ENCODE measurements at regions of chr7 and their contacts with region 1.

Region 1: GRCh38 chr7:155565596-155565995 is 19.2 kb upstream of the CNPY1 start:
- DNase-seq: no peak
- H3K4me3 ChIP-seq: no peak overlapping the region
- H3K4me3 Mint-ChIP-seq: no peak overlapping the region
- H3K27ac Mint-ChIP-seq: no peak overlapping the region
- H3K4me1 ChIP-seq: 0 out of 2 replicates have a peak, but pooled peaks cover 2% of the 10 kb centered on the region
- H3K4me1 Mint-ChIP-seq: no peaks in the 10 kb centered on the region
- H3K27me3 ChIP-seq: no peaks in the 10 kb centered on the region
- H3K27me3 Mint-ChIP-seq: no peaks in the 10 kb centered on the region
- CTCF ChIP-seq: no peak

Region 2: GRCh38 chr7:155497149-155497901 is 68.3 kb before region 1 on chr7:
- CTCF ChIA-PET with region 1: no interaction called
- POLR2A ChIA-PET with region 1: no interaction called
- intact Hi-C with region 1: no loop called
- DNase-seq: no peak
- H3K4me3 ChIP-seq: no peak overlapping the region
- H3K4me3 Mint-ChIP-seq: no peak overlapping the region
- H3K27ac Mint-ChIP-seq: no peak overlapping the region
- H3K4me1 ChIP-seq: no peaks in the 10 kb centered on the region; the same call in 1 of the 2 replicates
- H3K4me1 Mint-ChIP-seq: peaks cover 6% of the 10 kb centered on the region
- H3K27me3 ChIP-seq: no peaks in the 10 kb centered on the region
- H3K27me3 Mint-ChIP-seq: peaks cover 11% of the 10 kb centered on the region
- CTCF ChIP-seq: no peak

Region 3: GRCh38 chr7:155533827-155534690 is 31.5 kb before region 1 on chr7:
- CTCF ChIA-PET with region 1: no interaction called
- POLR2A ChIA-PET with region 1: no interaction called
- intact Hi-C with region 1: no loop called
- DNase-seq: peak in 1 of 2 experiments; percentile 41
- H3K4me3 ChIP-seq: no peak overlapping the region; the same call in 1 of the 2 replicates
- H3K4me3 Mint-ChIP-seq: peak overlapping the region; percentile 55
- H3K27ac Mint-ChIP-seq: no peak overlapping the region
- H3K4me1 ChIP-seq: peaks cover 18% of the 10 kb centered on the region; the same call in 1 of the 2 replicates
- H3K4me1 Mint-ChIP-seq: peaks cover 7% of the 10 kb centered on the region
- H3K27me3 ChIP-seq: no peaks in the 10 kb centered on the region
- H3K27me3 Mint-ChIP-seq: peaks cover 3% of the 10 kb centered on the region
- CTCF ChIP-seq: peak; percentile 49 to 60

Region 4: DNA sequence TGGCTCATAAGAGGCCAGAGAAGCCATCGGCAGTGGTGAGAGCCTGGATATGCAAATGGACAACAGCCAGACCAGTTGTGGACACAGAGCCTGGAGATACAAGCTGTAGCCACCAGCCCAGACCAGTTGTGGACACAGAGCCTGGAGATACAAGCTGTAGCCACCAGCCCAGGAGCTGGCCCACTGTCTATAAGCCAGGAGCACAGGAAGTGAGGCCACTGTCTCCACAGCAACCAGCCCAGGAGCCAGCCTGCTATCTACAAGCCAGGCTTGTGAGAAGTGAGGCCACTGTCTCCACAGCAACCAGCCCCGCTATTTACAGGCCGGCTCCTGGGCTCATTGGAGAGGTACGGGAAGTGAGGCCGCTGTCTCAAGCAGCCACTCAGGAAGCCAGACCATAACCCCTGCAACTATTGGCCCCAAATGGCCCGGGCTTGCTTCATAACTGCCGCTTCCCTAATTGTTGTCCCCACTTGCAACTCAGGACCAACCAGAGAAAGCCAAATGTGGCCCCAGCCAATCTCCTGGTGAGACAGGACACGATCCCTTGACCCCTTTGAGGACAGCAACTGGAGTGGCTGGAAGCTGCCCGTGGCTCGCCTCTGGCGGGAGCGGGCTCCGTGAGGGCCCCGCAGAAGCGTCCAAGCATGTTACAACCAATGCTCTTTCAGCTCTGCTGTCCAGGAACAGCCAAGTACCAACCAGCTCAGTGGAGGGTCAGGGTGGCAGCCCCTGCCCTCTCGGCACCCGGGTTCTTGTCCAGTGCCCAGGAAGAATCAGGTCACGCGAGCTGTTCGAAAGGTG is 24.8 kb after region 1 on chr7:
- CTCF ChIA-PET with region 1: no interaction called
- POLR2A ChIA-PET with region 1: no interaction called
- intact Hi-C with region 1: loop called (anchors 1 kb)
- DNase-seq: peak in 1 of 2 experiments; percentile 27
- H3K4me3 ChIP-seq: no peak overlapping the region
- H3K4me3 Mint-ChIP-seq: no peak overlapping the region
- H3K27ac Mint-ChIP-seq: no peak overlapping the region
- H3K4me1 ChIP-seq: peaks cover 18% of the 10 kb centered on the region; the same call in 1 of the 2 replicates
- H3K4me1 Mint-ChIP-seq: peaks cover 5% of the 10 kb centered on the region
- H3K27me3 ChIP-seq: no peaks in the 10 kb centered on the region
- H3K27me3 Mint-ChIP-seq: no peaks in the 10 kb centered on the region
- CTCF ChIP-seq: no peak